ENCODE measurements at regions of chr7 and their contacts with region 1.

Region 1: DNA sequence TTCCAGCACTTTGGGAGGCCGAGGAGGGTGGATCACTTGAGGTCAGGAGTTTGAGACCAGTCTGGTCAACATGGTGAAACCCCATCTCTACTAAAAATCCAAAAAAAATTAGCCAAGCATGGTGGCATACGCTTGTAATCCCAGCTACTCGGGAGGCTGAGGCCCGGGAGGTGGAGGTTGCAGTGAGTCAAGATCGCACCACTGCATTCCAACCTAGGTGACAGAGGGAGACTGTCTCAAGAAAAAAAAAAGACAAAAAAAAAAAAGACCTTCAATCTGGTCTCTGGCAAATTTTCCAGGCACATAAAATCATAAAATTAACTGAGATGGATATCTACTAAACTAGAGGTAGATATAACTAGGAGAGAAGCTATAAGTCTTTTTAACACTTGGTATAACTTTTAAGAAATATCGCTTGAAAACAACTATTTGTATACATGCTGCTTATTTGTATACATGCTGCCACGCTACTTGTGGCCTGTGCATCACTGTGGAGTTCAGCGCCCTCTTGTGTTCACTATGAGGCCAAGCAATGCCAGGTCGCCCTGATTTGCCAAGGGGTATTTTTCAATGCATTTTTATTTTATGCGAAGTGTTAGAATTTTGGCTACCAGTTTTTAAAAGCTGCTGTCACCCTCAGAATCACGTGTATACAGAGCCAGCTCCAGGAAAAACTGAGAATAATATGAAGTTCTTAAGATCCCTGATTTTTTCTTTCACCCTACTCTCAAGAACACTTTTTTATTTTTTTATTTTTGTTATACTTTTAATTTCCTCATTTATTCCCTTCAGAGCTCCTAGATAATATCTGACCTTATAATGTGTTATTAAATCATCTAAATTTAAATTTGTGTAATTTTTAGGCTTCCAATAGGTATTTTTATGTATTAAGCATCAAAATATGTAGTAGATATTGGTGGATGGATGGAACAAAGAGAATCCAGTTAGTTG is 26.7 kb downstream of the CYCS start:
- DNase-seq: peak; percentile 26 to 84 (median 42)
- ATAC-seq: peak; percentile 87
- H3K4me3 ChIP-seq: no peak overlapping the region
- H3K4me3 Mint-ChIP-seq: no peak overlapping the region
- H3K27ac ChIP-seq: no peak overlapping the region
- H3K27ac Mint-ChIP-seq: no peak overlapping the region
- H3K4me1 ChIP-seq: peaks cover 8% of the 10 kb centered on the region
- H3K4me1 Mint-ChIP-seq: peaks cover 9% of the 10 kb centered on the region
- H3K27me3 ChIP-seq: no peaks in the 10 kb centered on the region
- H3K27me3 Mint-ChIP-seq: peaks cover 1% of the 10 kb centered on the region
- CTCF ChIP-seq: peak; percentile 85

Region 2: DNA sequence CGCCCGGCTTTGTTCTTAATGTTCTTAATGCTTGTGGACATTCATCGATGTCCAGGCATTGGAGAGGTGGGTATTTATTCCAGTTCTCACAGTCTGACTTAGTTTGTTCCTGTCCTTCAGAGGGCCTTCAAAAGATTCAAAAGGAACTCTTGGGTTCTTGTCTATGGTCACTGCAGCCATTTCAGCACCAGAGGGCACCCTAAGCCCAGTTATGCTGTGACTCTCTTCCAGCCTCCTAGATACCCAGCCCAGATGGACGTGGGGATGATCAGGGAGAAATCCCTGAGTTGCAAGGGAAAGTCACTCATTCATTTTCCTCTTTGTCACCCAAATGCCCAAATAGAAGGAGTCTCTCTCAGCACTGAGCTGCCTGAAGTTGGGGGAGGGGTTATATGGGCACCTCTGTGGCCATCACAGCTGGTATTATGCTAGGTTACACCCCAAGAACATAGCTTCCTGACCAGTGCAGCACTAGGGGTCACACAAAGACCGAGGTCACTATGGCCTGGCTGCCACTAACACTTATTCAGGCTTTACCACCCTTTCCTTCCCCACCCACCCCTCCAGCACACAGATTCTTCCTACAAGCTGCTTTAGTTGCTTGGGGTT is 1527.7 kb before region 1 on chr7:
- CTCF ChIA-PET with region 1: no interaction called
- POLR2A ChIA-PET with region 1: no interaction called
- intact Hi-C with region 1: loop called (anchors 1 to 10 kb)
- DNase-seq: peak; percentile 48 to 83 (median 59)
- ATAC-seq: peak; percentile 81
- H3K4me3 ChIP-seq: no peak overlapping the region
- H3K4me3 Mint-ChIP-seq: no peak overlapping the region
- H3K27ac ChIP-seq: no peak overlapping the region
- H3K27ac Mint-ChIP-seq: no peak overlapping the region
- H3K4me1 ChIP-seq: peaks cover 4% of the 10 kb centered on the region
- H3K4me1 Mint-ChIP-seq: no peaks in the 10 kb centered on the region
- H3K27me3 ChIP-seq: peaks cover 0 to 2% of the 10 kb centered on the region in 2 experiments
- H3K27me3 Mint-ChIP-seq: peaks cover 16% of the 10 kb centered on the region
- CTCF ChIP-seq: peak; percentile 79

Region 3: GRCh38 chr7:24812310-24812945 is 285.9 kb before region 1 on chr7:
- CTCF ChIA-PET with region 1: interaction called, 43 read pairs
- POLR2A ChIA-PET with region 1: interaction called, 8 read pairs
- intact Hi-C with region 1: loop called (anchors 1 kb)
- DNase-seq: peak; percentile 11 to 74 (median 38)
- ATAC-seq: peak; percentile 71
- H3K4me3 ChIP-seq: no peak overlapping the region
- H3K4me3 Mint-ChIP-seq: no peak overlapping the region
- H3K27ac ChIP-seq: no peak overlapping the region
- H3K27ac Mint-ChIP-seq: no peak overlapping the region
- H3K4me1 ChIP-seq: no peaks in the 10 kb centered on the region
- H3K4me1 Mint-ChIP-seq: no peaks in the 10 kb centered on the region
- H3K27me3 ChIP-seq: no peaks in the 10 kb centered on the region
- H3K27me3 Mint-ChIP-seq: no peaks in the 10 kb centered on the region
- CTCF ChIP-seq: peak; percentile 96

Measured in CD4-positive, alpha-beta T cell (primary cell).